ENCODE measurements at regions of chr17 and their contacts with region 1.

Region 1: DNA sequence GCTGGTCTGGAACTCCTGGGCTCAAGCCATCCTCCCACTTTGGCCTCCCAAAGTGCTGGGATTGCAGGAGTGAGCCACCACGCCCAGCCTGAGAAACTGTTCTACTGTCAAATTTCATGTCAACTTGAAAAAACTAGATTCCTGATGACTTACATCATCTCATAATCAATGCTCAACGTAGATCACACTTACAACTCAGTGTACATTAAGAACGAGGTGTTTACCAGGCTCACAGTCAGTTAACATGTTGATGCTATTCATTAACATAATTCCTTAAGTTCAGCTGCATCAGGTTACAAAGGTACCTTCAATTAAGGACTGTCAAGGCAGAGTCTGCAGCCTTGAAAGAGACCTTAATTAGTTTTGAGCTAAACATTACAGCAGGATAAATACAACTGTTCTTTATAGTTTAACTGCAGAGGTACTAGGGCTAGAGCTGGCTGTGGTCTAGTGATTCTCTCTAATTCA is 2.0 kb downstream of the GNA13 start:
- DNase-seq: no peak
- H3K4me3 ChIP-seq: peak overlapping the region; percentile 93
- CTCF ChIP-seq: no peak

Region 2: DNA sequence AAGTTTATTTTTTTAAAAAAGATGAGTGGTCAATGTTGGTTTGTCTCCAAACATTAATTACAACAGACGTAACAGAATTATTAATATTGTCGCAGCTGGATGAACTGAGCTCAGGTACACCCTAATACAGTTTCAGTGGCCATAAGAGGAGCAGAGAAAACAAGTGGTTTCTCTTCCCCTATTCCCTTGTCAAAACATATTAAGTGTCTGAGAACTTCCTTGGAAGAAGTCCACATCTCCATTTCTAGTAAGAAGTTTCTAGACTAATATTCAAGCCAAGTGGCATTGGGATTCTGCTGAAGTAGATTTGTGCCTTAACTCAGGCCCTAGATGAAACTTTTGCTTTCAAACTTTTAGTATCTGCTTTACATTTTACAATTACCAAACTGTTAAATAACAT is 45.7 kb before region 1 on chr17:
- in situ Hi-C with region 1: loop called (anchors 5 kb)
- DNase-seq: no peak
- H3K4me3 ChIP-seq: no peak overlapping the region
- CTCF ChIP-seq: no peak

Measured in astrocyte of the cerebellum (primary cell).